Sigmoid colon (tissue), 7 donors: ENCODE measurements at regions of chr3 and their contacts with region 1.

Region 1: GRCh38 chr3:195863121-195864006 is 45.0 kb downstream of the TNK2 start:
- DNase-seq: peak; percentile 96
- H3K4me3 ChIP-seq: no peak overlapping the region
- H3K27ac ChIP-seq: peak overlapping the region; percentile 55 to 71 (median 71)
- H3K4me1 ChIP-seq: peaks cover 0 to 23% (median 17%) of the 10 kb centered on the region in 4 donors
- H3K27me3 ChIP-seq: no peaks in the 10 kb centered on the region
- CTCF ChIP-seq: peak; percentile 88 to 97 (median 96)
- EP300 ChIP-seq: no peak
- POLR2A ChIP-seq: no peak

Region 2: GRCh38 chr3:195894780-195895607 is 31.6 kb after region 1 on chr3:
- intact Hi-C with region 1: loop called (anchors 1 kb)
- DNase-seq: peak; percentile 73
- H3K4me3 ChIP-seq: peak overlapping the region; percentile 57 to 82 (median 70)
- H3K27ac ChIP-seq: peak overlapping the region; percentile 90 to 95 (median 93)
- H3K4me1 ChIP-seq: peaks cover 0 to 69% (median 63%) of the 10 kb centered on the region in 4 donors
- H3K27me3 ChIP-seq: no peaks in the 10 kb centered on the region
- CTCF ChIP-seq: peak; percentile 94 to 97 (median 96)
- EP300 ChIP-seq: no peak
- POLR2A ChIP-seq: no peak